Activated naive CD4-positive, alpha-beta T cell treated with anti-CD3 and anti-CD28 coated beads for 36 hours (primary cell): ENCODE measurements at regions of chr1 and their contacts with region 1.

Region 1: DNA sequence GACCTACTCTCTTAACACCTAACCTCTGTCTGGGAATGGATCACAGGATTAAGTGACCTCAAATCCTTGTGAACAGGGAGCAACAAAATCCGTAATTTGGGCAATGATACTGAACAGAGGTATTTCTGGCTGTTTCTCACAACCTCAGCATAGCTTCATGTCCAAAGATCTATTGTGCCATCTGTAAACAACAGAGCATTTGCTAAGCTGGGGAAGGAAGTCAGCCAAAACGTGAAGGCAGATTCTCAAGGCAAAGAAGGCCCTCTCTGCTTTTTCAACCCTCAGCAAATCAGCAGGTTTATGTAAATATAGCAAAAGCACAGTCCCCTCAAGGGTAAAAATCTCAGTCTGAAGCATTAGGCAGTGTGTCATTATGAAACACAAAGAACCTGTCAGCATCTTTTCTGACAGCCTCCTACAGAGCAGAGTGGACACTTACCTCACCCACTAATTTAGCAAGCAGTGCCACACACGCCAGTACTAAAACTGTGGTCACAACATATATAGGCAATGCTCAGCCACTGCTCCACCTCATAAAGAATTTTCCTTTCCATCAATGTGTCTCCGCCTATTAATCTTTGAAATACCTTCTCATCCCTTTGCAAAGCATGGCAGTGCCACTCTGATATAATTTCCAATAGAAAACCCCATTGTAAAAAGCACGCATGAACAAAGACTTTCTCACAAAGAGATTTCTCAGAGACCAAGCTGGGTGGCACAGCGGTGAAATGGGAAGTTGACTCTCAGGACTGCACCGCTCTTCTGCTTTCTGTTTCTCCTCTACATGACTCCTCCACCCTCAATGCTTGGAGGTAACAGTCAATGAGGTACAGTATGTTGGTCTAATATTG is 188.0 kb downstream of the RERE start:
- DNase-seq: peak; percentile 37
- H3K4me3 Mint-ChIP-seq: no peak overlapping the region
- H3K27ac Mint-ChIP-seq: no peak overlapping the region
- H3K4me1 Mint-ChIP-seq: peaks cover 58% of the 10 kb centered on the region
- H3K27me3 Mint-ChIP-seq: no peaks in the 10 kb centered on the region

Region 2: DNA sequence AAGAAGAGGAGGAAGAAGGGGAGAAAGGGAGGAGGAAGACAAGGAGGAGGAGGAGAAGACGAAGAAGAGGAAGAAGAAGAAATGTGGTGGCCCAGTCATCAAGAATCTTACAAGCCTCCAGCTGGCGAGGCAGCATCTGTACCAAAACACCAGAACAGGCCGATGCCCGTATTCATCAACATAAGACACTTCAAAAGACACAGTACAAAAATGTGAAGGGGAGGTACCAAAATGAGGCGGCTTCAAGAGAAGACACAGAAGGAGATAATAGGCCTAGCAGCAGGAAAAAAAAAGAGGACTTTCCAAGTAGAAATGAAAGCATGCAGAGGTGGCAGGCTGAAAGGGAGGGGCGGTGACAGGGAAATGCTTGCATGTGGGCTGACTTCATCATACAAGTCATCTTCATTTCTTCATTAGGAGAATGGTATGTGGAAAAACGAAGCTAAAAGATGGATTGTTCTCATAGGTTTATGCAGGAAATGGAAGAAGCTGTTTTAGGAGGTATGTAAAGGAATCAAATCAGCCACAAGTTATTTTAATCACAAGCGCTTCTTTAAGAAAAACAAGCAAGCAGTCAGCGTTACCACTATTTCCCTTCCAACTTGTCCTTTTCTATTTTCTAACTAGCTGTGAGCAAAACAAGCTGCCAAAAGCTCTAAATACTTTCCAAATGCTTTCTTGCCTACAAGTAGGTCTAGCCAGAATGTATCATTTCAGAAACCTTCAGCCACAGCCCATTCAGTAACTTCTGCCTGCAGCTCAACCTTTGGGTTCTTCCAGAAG is 119.2 kb before region 1 on chr1:
- CTCF ChIA-PET with region 1: no interaction called
- intact Hi-C with region 1: no loop called
- DNase-seq: peak; percentile 81
- H3K4me3 Mint-ChIP-seq: peak overlapping the region; percentile 54
- H3K27ac Mint-ChIP-seq: peak overlapping the region; percentile 93
- H3K4me1 Mint-ChIP-seq: peaks cover 46% of the 10 kb centered on the region
- H3K27me3 Mint-ChIP-seq: no peaks in the 10 kb centered on the region

Region 3: DNA sequence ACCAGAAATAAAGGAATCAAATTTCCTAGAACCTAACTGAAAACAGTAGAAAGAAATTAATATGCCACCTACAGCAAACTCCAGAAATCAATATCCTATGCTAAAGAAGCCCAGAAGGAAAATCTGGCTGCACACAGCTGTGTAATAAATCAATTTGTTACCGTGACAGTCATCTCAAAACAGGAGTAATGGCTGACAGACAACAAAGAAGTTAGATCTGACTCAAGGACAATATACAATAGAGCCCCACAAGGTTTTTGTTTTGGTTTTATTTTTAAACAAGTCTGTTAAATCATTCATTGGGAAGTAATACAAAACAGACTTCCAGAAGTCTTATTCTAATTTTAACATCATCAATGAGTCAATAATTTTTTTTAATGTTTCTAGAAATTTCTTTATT is 19.6 kb after region 1 on chr1:
- CTCF ChIA-PET with region 1: no interaction called
- intact Hi-C with region 1: loop called (anchors 2 kb)
- DNase-seq: peak; percentile 13
- H3K4me3 Mint-ChIP-seq: no peak overlapping the region
- H3K27ac Mint-ChIP-seq: no peak overlapping the region
- H3K4me1 Mint-ChIP-seq: peaks cover 49% of the 10 kb centered on the region
- H3K27me3 Mint-ChIP-seq: no peaks in the 10 kb centered on the region

Region 4: DNA sequence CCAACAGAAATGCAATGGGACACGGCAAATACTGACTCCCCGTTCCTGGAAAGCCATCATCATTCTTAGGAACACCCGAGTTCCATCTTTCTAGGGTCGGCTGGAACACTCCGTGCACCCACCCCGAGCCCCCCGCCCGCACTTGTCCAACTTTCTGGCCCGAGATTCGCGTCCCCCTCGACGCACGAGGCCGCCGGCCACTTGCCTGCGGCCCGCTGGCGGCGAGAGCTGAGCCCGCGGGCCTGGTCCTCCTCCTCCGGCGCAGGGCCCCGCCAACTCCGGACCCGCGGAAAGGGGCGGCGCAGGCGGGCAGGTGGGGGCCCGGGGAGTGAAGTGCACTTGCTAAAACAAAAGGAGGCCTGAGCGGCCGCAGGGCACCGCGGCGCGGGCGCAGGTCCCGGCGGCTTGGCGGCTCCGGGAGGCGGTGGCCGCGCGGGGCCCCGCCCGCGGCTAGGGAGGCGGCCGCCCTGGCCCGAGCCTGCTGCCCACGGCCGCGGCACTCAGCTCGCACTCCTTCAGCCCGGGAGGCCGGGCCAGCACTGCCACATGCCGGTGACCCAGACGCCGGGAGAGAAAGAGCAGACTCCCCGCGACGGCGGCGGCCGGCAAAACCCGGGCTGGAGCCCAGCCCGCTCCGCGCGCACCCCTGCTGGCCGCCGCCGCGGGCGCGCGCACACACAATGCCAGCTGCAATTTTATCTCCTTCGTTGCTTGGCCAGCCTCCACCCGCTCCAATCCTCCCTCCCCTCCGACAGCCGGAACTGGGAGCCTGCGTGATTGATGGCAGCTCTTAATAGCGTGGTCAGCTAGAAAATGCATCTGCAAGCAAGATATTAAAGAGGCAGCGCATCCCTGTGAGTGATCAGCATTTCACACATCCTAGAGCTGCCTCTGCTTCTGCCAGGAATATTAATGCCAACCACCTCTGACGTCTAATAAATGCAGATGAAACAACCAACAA is 73.7 kb after region 1 on chr1:
- CTCF ChIA-PET with region 1: no interaction called
- intact Hi-C with region 1: no loop called
- DNase-seq: peak; percentile 72
- H3K4me3 Mint-ChIP-seq: peak overlapping the region; percentile 84
- H3K27ac Mint-ChIP-seq: no peak overlapping the region
- H3K4me1 Mint-ChIP-seq: peaks cover 31% of the 10 kb centered on the region
- H3K27me3 Mint-ChIP-seq: peaks cover 36% of the 10 kb centered on the region

Region 5: DNA sequence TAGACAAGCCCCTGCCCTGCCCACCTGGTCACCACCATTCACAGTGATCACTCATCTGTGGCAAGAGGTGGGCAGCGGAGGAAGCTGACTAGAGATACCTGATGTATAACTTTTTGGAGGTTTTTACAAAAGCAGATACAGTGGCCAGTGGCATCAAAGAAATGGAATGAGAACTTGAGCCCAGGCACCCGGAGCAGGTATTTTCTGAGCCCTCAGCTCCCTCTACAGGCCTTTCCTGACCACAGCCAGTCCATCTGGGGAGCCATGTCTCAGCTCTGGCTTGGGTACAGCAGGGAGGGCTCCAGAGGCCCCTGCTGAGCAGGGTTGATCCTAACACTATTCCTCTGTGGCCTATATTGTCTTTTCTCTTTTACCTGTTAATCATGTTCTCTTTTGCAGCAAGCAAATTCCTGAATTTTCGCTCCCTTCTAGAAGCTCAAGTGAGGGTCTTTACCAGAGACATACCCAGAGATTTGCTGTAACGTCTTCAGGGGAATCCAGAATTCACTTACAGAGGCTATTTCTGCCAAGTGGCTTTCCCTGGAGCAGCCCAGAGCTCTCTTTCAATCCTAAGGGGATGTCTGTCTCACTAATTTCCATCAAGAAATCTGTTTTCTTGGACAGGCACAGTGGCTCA is 472.2 kb after region 1 on chr1:
- CTCF ChIA-PET with region 1: no interaction called
- intact Hi-C with region 1: no loop called
- DNase-seq: peak; percentile 62
- H3K4me3 Mint-ChIP-seq: no peak overlapping the region
- H3K27ac Mint-ChIP-seq: no peak overlapping the region
- H3K4me1 Mint-ChIP-seq: no peaks in the 10 kb centered on the region
- H3K27me3 Mint-ChIP-seq: no peaks in the 10 kb centered on the region

Region 6: DNA sequence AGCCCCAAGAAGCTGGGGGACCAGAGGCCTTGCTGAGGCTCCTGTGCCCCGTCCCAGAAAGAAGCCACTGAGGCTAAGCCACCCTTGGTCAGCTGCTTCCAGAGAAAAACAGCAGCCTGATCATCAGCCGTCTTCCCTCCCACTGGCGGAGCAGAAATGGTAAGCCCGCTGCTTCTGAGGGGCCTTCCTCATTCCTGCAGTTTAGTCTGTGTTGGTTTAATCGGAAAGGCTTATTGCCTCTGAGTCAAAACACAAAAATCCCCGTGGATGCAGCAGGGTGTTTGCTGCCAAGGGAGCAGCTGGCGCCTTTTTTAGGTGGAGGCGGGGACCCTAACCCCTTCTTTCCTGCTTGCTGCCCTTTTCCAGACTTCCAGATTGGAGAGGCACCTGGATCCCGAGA is 697.1 kb after region 1 on chr1:
- CTCF ChIA-PET with region 1: no interaction called
- intact Hi-C with region 1: no loop called
- DNase-seq: no peak
- H3K4me3 Mint-ChIP-seq: no peak overlapping the region
- H3K27ac Mint-ChIP-seq: no peak overlapping the region
- H3K4me1 Mint-ChIP-seq: no peaks in the 10 kb centered on the region
- H3K27me3 Mint-ChIP-seq: no peaks in the 10 kb centered on the region